ENCODE measurements at regions of chr10 and their contacts with region 1.

Region 1: GRCh38 chr10:72370201-72370722 is 15.5 kb upstream of the DNAJB12 start:
- DNase-seq: peak; percentile 73 to 82 (median 77)
- H3K4me3 ChIP-seq: no peak overlapping the region
- H3K4me3 Mint-ChIP-seq: peak overlapping the region in 7 of 8 donors; percentile 55 to 81 (median 64)
- H3K27ac ChIP-seq: peak overlapping the region; percentile 30
- H3K27ac Mint-ChIP-seq: peak overlapping the region; percentile 87 to 93 (median 89)
- H3K4me1 ChIP-seq: peaks cover 35% of the 10 kb centered on the region
- H3K4me1 Mint-ChIP-seq: peaks cover 7 to 38% (median 27%) of the 10 kb centered on the region in 4 donors
- H3K27me3 ChIP-seq: no peaks in the 10 kb centered on the region
- H3K27me3 Mint-ChIP-seq: no peaks in the 10 kb centered on the region

Region 2: GRCh38 chr10:72319416-72320254 is 50.6 kb before region 1 on chr10:
- CTCF ChIA-PET with region 1: no interaction called
- POLR2A ChIA-PET with region 1: no interaction called
- intact Hi-C with region 1: no loop called
- DNase-seq: peak; percentile 87 to 91 (median 89)
- H3K4me3 ChIP-seq: peak overlapping the region; percentile 46 to 55
- H3K4me3 Mint-ChIP-seq: peak overlapping the region; percentile 79 to 89 (median 84)
- H3K27ac ChIP-seq: peak overlapping the region; percentile 89
- H3K27ac Mint-ChIP-seq: peak overlapping the region; percentile 96 to 99 (median 99)
- H3K4me1 ChIP-seq: peaks cover 95% of the 10 kb centered on the region
- H3K4me1 Mint-ChIP-seq: peaks cover 53 to 92% (median 74%) of the 10 kb centered on the region in 4 donors
- H3K27me3 ChIP-seq: no peaks in the 10 kb centered on the region
- H3K27me3 Mint-ChIP-seq: no peaks in the 10 kb centered on the region

Region 3: DNA sequence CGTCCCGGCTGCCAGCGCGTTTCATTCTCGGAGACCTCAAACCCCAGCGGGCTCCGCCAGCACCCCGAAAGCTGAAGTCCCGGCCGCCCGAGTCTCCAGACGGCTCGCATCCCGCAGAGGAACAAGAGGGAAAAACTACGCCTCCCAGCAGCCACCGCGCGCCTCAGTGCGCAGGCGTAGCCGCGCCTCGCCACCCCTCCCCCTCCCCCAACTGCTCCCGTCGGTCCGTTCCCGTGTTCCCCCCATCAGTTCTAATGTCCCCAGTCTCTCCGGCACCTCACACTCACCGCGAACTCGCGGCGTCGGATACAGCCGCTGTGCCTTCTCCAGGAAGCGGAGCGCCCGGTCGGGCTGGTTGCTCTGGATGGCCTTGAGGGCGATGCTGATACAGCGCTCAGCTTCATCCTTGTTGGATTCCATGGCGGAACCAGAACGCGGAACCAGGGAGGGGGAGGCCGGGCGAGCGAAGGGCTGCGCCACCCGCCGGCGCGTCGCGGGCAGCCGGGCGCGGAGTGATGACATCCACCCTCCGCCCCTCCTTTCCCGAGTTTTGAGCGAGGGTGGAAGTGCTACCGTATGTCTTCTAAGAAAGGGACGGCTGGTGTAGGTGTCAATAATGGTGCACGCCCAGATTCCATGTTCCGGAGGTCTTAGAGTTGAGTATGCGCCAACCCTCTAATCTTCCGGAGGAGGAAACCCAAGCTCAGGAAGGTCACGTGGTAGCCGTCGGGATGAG is 15.6 kb before region 1 on chr10 and contains the start of gene DNAJB12:
- CTCF ChIA-PET with region 1: interaction called, 14 read pairs
- POLR2A ChIA-PET with region 1: interaction called, 10 read pairs
- intact Hi-C with region 1: loop called (anchors 1 kb)
- DNase-seq: peak; percentile 92 to 97 (median 94)
- H3K4me3 ChIP-seq: peak within 1 kb of the TSS; percentile 92 to 99
- H3K4me3 Mint-ChIP-seq: peak within 1 kb of the TSS; percentile 94 to 99 (median 97)
- H3K27ac ChIP-seq: peak within 1 kb of the TSS; percentile 80
- H3K27ac Mint-ChIP-seq: peak within 1 kb of the TSS; percentile 90 to 99 (median 98)
- H3K4me1 ChIP-seq: peaks cover 34% of the 10 kb centered on the region
- H3K4me1 Mint-ChIP-seq: peaks cover 30 to 54% (median 42%) of the 10 kb centered on the region in 4 donors
- H3K27me3 ChIP-seq: no peaks in the 10 kb centered on the region
- H3K27me3 Mint-ChIP-seq: no peaks in the 10 kb centered on the region
- total RNA-seq, gene DNAJB12: 26.3 to 26.7 TPM

Measured in CD4-positive, alpha-beta memory T cell (primary cell).